Dendritic cell treated with granulocyte-macrophage colony-stimulating factor and Interleukin-4, amounts not matched to agents 40 ng/mL and 50 ng/mL, for 4 days (primary cell): ENCODE measurements at regions of chr6 and their contacts with region 1.

Region 1: DNA sequence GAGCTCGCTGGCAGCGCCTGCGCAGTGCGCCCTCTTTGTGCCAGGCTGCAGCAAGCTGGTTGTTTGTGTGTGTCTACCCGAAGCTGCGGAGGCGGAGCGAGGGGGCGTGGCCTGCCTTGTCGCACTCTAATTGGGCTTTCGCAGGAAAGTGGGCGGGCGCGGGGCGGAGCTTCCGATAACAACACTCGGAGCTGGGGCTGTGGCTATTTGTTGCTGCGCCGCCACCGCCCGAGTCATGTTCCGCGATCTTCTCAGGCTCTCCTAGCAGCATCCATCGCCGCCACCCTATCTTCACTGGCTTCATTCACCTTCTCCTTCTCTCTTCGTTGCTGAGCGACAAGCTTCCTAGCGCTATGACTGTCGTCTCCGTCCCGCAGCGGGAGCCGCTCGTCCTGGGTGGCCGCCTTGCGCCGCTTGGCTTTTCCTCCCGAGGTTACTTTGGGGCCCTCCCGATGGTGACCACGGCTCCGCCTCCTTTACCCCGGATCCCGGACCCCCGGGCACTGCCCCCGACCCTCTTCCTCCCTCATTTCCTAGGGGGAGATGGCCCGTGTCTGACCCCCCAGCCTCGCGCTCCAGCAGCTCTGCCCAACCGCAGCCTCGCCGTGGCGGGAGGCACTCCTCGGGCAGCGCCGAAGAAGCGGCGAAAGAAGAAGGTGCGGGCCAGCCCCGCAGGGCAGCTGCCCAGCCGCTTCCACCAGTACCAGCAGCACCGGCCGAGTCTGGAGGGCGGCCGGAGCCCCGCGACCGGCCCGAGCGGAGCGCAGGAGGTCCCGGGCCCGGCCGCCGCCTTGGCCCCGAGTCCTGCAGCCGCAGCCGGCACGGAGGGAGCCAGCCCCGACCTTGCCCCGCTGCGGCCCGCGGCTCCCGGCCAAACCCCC is at the start of gene PNRC1:
- H3K4me3 Mint-ChIP-seq: peak within 1 kb of the TSS; percentile 98
- H3K27ac Mint-ChIP-seq: peak within 1 kb of the TSS; percentile 95
- H3K4me1 Mint-ChIP-seq: peaks cover 37% of the 10 kb centered on the region
- H3K27me3 Mint-ChIP-seq: no peaks in the 10 kb centered on the region

Region 2: GRCh38 chr6:88963139-88964090 is 117.4 kb before region 1 on chr6 and contains the start of gene RNGTT:
- intact Hi-C with region 1: loop called (anchors 1 kb)
- H3K4me3 Mint-ChIP-seq: peak within 1 kb of the TSS; percentile 96
- H3K27ac Mint-ChIP-seq: peak within 1 kb of the TSS; percentile 97
- H3K4me1 Mint-ChIP-seq: peaks cover 24% of the 10 kb centered on the region
- H3K27me3 Mint-ChIP-seq: peaks cover 4% of the 10 kb centered on the region

Region 3: DNA sequence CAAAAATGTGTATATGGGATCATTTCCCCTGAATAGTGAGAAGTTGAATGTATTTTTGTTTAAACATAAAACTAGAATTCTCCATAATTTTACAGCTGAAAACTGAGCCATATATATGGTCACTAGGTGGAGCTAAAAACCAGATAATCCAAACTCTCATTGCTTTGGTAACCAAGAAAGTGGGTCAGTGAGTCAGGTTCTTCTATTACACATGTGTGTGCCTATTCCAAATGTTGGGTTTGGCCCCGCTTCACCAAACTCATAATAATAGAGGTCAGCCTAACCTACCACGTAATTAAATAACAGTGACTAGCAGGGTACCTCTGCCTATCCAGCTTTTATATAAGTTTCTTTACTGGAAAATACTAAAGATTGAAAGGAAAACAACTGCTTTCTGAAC is 98.1 kb before region 1 on chr6:
- intact Hi-C with region 1: loop called (anchors 2 kb)
- H3K4me3 Mint-ChIP-seq: no peak overlapping the region
- H3K27ac Mint-ChIP-seq: no peak overlapping the region
- H3K4me1 Mint-ChIP-seq: peaks cover 9% of the 10 kb centered on the region
- H3K27me3 Mint-ChIP-seq: no peaks in the 10 kb centered on the region

Region 4: GRCh38 chr6:88992741-88993552 is 87.8 kb before region 1 on chr6:
- intact Hi-C with region 1: no loop called
- H3K4me3 Mint-ChIP-seq: no peak overlapping the region
- H3K27ac Mint-ChIP-seq: no peak overlapping the region
- H3K4me1 Mint-ChIP-seq: peaks cover 33% of the 10 kb centered on the region
- H3K27me3 Mint-ChIP-seq: no peaks in the 10 kb centered on the region

Region 5: GRCh38 chr6:89033461-89033860 is 47.3 kb before region 1 on chr6:
- intact Hi-C with region 1: loop called (anchors 1 kb)
- H3K4me3 Mint-ChIP-seq: no peak overlapping the region
- H3K27ac Mint-ChIP-seq: peak overlapping the region; percentile 95
- H3K4me1 Mint-ChIP-seq: peaks cover 51% of the 10 kb centered on the region
- H3K27me3 Mint-ChIP-seq: no peaks in the 10 kb centered on the region

Region 6: GRCh38 chr6:89145787-89146646 is 65.2 kb after region 1 on chr6 and contains the start of gene PM20D2:
- intact Hi-C with region 1: loop called (anchors 10 kb)
- H3K4me3 Mint-ChIP-seq: peak within 1 kb of the TSS; percentile 78
- H3K27ac Mint-ChIP-seq: peak within 1 kb of the TSS; percentile 46
- H3K4me1 Mint-ChIP-seq: peaks cover 8% of the 10 kb centered on the region
- H3K27me3 Mint-ChIP-seq: no peaks in the 10 kb centered on the region

Region 7: DNA sequence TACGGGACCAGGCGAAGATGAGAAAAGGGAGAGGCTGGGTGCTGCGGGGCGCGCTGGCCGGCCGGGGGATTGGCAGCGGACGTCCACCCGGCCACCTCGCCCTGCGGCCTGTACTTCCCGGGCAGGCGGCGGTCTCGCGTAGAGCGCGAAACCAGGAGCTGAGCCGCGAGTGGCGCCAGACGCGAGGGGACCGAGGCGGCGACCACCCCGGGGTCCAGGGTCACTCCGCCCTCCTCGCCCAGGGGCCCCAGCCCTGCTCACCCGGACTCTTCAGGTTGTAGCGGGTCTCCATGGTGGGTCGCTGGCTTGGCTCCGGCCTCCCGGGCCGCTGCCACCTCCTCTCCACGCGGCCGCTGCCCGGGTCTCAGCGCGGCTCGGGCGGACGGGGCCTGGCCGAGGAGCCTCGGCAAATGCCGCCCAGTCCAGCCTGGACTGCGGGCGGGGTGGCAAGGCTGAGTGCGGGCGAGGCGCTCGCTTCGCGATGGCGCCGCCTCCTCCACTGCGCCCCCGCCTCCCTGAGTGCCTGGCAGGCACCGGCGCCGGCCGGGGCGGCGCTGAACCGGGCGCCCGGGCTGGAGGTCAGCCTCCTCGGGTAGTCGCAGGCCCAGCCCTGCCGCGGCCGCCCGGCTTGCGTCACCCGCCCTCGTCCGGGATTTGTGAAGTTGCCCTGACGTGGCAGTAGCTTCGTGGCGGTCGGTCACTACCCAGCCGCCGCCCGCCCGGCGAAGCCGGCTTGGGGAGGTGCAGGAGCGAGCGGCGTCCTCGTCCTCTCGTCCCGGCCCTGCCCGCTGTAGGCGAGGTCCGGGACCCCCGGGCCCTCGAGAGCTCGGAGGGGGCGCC is 271.7 kb after region 1 on chr6 and contains the start of gene UBE2J1:
- intact Hi-C with region 1: loop called (anchors 5 kb)
- H3K4me3 Mint-ChIP-seq: peak within 1 kb of the TSS; percentile 88
- H3K27ac Mint-ChIP-seq: peak within 1 kb of the TSS; percentile 94
- H3K4me1 Mint-ChIP-seq: peaks cover 45% of the 10 kb centered on the region
- H3K27me3 Mint-ChIP-seq: no peaks in the 10 kb centered on the region